Ascending aorta (tissue), 2 donors: ENCODE measurements at regions of chr16 and their contacts with region 1.

Region 1: GRCh38 chr16:19717771-19718602 is at the starts of genes IQCK and KNOP1:
- DNase-seq: peak; percentile 48 to 95
- H3K4me3 ChIP-seq: peak within 1 kb of the TSS; percentile 89 to 90
- H3K27ac ChIP-seq: peak within 1 kb of the TSS; percentile 46 to 80
- H3K4me1 ChIP-seq: peaks cover 0 to 12% of the 10 kb centered on the region in 2 donors
- H3K27me3 ChIP-seq: no peaks in the 10 kb centered on the region
- CTCF ChIP-seq: peak in 1 of 3 experiments; percentile 2
- total RNA-seq, gene IQCK: not detected
- total RNA-seq, gene KNOP1: 2.4 TPM

Region 2: DNA sequence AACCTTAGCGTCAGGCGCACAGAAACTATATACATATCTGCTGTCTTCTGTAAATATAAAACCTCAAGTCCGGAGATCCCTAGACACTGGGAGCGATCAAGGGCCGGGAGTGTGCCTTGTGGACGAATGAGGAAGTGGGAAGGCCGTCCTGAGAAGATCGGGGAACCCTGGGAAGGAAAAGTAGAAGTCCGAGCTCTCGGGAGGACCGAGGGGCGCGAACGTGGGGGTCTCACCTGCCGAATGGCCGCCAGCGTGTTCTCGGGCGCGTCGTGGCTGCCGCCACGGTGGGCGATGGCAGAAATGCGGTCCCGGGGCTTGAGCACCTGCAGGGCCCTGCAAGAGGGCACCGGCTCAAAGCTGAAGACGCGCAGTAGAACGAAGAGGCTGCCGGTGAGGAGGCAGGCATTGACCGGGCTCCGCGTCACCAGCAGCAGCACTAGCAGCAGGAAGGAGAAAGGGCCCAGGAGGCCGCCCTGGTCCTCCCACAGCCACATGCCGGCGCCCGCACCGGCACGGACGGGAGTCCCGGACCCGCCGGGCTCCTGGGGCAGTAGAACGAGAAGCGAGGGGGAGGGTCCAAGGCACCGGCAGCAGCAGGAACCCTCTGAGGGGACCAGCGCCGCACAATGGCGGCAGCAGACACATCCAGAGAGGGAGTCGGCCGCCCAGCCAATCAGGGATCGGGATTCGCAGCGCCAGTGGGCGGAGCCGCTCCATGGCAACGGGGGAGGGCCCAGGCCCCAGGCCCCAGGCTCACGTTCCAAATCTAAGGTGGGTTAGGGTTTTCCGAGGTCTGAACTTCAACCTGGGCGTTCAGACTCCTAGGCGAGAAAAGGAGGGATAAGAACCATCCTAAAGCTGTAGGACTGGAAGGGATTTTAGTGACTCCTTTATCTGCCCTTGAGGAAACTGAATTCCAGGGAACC is 196.3 kb before region 1 on chr16 and contains the start of gene GDE1:
- intact Hi-C with region 1: loop called (anchors 2 kb)
- DNase-seq: peak; percentile 82 to 97
- H3K4me3 ChIP-seq: peak within 1 kb of the TSS; percentile 82 to 89
- H3K27ac ChIP-seq: peak within 1 kb of the TSS; percentile 85 to 91
- H3K4me1 ChIP-seq: peaks cover 6 to 31% of the 10 kb centered on the region in 2 donors
- H3K27me3 ChIP-seq: no peaks in the 10 kb centered on the region
- CTCF ChIP-seq: peak; percentile 17 to 55 (median 50)
- total RNA-seq, gene GDE1: 27.4 TPM

Region 3: GRCh38 chr16:19645557-19645981 is 72.4 kb before region 1 on chr16:
- intact Hi-C with region 1: loop called (anchors 5 kb)
- DNase-seq: no peak
- H3K4me3 ChIP-seq: no peak overlapping the region
- H3K27ac ChIP-seq: peak overlapping the region; percentile 45 to 51
- H3K4me1 ChIP-seq: peaks cover 0 to 16% of the 10 kb centered on the region in 2 donors
- H3K27me3 ChIP-seq: no peaks in the 10 kb centered on the region
- CTCF ChIP-seq: no peak

Region 4: DNA sequence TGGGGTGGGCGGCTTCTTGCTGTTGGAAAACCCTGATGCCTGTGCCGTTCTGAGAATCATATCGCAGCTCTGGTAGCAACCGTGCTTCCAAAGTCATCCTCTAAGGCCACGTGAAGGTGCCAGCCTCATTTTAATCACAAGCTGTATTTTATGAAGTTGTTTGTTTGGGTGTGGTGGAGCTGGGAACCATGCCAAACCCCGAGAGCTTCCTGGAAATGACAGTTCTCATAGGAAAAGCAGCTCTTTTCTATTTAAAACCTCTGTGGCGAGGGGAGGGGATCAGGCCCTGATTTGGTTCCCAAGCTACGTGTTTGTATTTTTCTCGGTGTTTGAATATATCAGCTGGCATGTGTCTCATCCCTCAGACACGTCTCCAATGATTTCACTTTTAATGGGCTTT is 21.7 kb before region 1 on chr16:
- intact Hi-C with region 1: no loop called
- DNase-seq: peak; percentile 47 to 83
- H3K4me3 ChIP-seq: no peak overlapping the region
- H3K27ac ChIP-seq: peak overlapping the region; percentile 46 to 50
- H3K4me1 ChIP-seq: peaks cover 0 to 3% of the 10 kb centered on the region in 2 donors
- H3K27me3 ChIP-seq: no peaks in the 10 kb centered on the region
- CTCF ChIP-seq: no peak

Region 5: DNA sequence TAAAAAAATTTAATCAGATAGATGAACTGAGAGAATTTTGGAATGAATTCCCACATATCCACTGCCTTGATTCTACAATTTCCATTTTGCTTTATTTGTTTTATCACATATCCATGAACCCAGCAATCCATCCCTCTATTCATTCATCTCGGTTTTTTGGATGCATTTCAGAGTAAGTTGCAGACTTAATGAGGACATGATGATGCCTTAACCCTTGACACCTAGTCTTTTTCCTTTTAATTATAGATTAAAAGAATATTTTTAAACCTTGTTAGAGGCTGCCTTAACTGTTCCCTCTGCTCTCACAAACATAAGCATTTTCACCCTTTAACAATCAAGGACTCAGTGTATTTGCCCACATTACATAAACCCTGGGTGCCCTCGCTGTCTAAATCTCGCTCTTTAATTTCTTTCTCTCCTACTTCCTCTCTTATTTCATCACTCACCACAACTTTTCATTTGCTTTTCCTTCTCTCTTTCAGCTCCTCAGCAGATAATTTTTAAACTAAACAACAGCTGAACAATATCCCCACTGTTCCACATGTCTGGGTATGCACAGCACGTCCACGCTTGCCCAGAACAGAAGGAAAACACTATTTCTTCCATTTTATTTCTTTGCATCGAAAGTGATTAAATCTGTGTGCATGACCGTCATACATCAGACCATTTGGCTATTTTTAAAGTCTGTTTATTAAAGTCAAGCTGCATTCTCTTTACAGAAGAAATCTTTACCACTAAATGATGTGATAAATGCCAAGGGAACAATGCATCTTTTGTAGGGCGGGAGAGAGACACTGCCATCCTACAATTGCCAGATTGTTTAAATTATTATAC is 40.0 kb after region 1 on chr16:
- intact Hi-C with region 1: loop called (anchors 5 kb)
- DNase-seq: peak in 1 of 2 donors; percentile 1
- H3K4me3 ChIP-seq: no peak overlapping the region
- H3K27ac ChIP-seq: no peak overlapping the region
- H3K4me1 ChIP-seq: peaks cover 0 to 17% of the 10 kb centered on the region in 2 donors
- H3K27me3 ChIP-seq: no peaks in the 10 kb centered on the region
- CTCF ChIP-seq: no peak

Region 6: GRCh38 chr16:19886073-19886941 is 168.3 kb after region 1 on chr16:
- intact Hi-C with region 1: loop called (anchors 1 kb)
- DNase-seq: peak in 1 of 2 donors; percentile 87
- H3K4me3 ChIP-seq: peak overlapping the region; percentile 73 to 91
- H3K27ac ChIP-seq: no peak overlapping the region
- H3K4me1 ChIP-seq: peaks cover 0 to 5% of the 10 kb centered on the region in 2 donors
- H3K27me3 ChIP-seq: no peaks in the 10 kb centered on the region
- CTCF ChIP-seq: peak; percentile 96 to 100 (median 99)